PC-9 (cell line): ENCODE measurements at regions of chr11 and their contacts with region 1.

Region 1: DNA sequence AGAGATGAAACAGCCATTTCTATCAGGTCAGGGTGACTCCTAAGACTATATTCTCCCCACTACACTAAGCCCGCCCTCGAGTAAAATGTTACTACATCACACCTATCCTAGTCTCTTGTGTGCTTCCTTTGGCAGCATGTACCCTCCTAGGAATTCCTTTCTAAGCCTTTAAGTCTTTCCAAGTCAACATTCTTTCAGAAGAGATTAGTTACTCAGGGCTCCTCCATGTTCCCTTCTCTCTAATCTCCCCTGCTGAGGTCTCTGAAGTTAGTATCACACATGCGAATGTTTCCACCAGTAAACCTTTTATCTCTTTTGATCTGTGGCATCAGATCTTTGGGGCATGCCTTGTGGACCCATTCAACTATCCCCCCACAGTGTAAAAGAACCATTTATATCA is 873.7 kb upstream of the FAT3 start:
- DNase-seq: no peak
- H3K4me3 ChIP-seq: no peak overlapping the region
- H3K27ac ChIP-seq: no peak overlapping the region
- H3K4me1 ChIP-seq: no peaks in the 10 kb centered on the region
- H3K27me3 ChIP-seq: no peaks in the 10 kb centered on the region
- CTCF ChIP-seq: no peak

Region 2: GRCh38 chr11:91178366-91178765 is 172.6 kb before region 1 on chr11:
- CTCF ChIA-PET with region 1: no interaction called
- POLR2A ChIA-PET with region 1: no interaction called
- intact Hi-C with region 1: no loop called
- DNase-seq: no peak
- H3K4me3 ChIP-seq: no peak overlapping the region
- H3K27ac ChIP-seq: no peak overlapping the region
- H3K4me1 ChIP-seq: peaks cover 8% of the 10 kb centered on the region; the same call in 1 of the 2 replicates
- H3K27me3 ChIP-seq: no peaks in the 10 kb centered on the region
- CTCF ChIP-seq: no peak

Region 3: DNA sequence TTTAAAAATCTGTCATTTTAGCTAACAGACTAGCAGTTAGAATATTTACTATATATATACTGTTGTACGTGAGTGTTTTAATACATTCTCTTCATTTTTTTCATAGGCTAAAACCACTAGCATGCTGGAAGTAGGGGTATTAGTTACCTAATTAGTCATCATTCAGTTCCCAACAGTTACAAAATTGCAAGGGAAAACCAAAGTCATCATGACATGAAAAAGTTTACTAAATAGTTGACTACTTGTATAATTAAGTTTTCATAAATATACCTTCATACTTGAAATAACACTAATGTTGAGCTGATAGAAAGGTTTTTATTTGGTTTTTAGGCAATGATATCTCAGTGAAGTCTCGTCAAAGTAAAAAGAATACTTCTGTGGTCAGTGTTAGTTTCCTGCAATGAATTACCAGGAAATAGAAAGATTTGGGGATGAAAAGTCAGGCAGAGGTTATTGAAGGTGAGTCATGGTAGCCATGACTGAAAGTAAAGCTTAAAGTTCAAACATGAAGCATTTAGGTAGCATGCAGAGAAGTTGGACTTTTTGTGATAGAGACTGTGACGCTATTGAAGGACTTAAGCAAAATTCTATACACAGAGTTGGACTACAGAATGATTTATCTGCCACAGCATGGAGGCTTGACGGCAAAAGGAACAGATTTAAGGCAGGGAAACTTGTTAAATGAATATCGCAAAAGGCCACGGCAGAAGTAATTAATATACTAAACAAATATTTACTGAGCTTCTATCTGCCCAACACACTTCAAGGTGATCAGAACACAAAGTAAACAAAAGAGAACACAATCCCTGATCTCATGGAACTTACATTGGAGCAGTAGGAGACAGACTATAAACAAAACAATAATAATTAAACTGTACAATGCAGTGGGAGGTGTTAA is 45.6 kb after region 1 on chr11:
- CTCF ChIA-PET with region 1: no interaction called
- POLR2A ChIA-PET with region 1: no interaction called
- intact Hi-C with region 1: no loop called
- DNase-seq: peak; percentile 20 to 93
- H3K4me3 ChIP-seq: peak overlapping the region; percentile 45
- H3K27ac ChIP-seq: peak overlapping the region; percentile 99
- H3K4me1 ChIP-seq: peaks cover 55% of the 10 kb centered on the region
- H3K27me3 ChIP-seq: no peaks in the 10 kb centered on the region
- CTCF ChIP-seq: no peak

Region 4: GRCh38 chr11:91641153-91641552 is 290.2 kb after region 1 on chr11:
- CTCF ChIA-PET with region 1: no interaction called
- POLR2A ChIA-PET with region 1: interaction called, 13 read pairs
- intact Hi-C with region 1: no loop called
- DNase-seq: no peak
- H3K4me3 ChIP-seq: no peak overlapping the region
- H3K27ac ChIP-seq: no peak overlapping the region
- H3K4me1 ChIP-seq: no peaks in the 10 kb centered on the region
- H3K27me3 ChIP-seq: no peaks in the 10 kb centered on the region
- CTCF ChIP-seq: no peak